CD4-positive, alpha-beta memory T cell (primary cell): ENCODE measurements at regions of chr6 and their contacts with region 1.

Region 1: GRCh38 chr6:20319520-20320357 is 81.9 kb upstream of the E2F3 start:
- DNase-seq: peak; percentile 77 to 86 (median 83)
- H3K4me3 ChIP-seq: peak overlapping the region; percentile 51 to 80
- H3K4me3 Mint-ChIP-seq: peak overlapping the region; percentile 87 to 96 (median 94)
- H3K27ac ChIP-seq: peak overlapping the region; percentile 68
- H3K27ac Mint-ChIP-seq: peak overlapping the region; percentile 88 to 98 (median 97)
- H3K4me1 ChIP-seq: peaks cover 16% of the 10 kb centered on the region
- H3K4me1 Mint-ChIP-seq: peaks cover 10 to 26% (median 19%) of the 10 kb centered on the region in 4 donors
- H3K27me3 ChIP-seq: no peaks in the 10 kb centered on the region
- H3K27me3 Mint-ChIP-seq: no peaks in the 10 kb centered on the region

Region 2: GRCh38 chr6:20291764-20292580 is 27.8 kb before region 1 on chr6:
- CTCF ChIA-PET with region 1: interaction called, 10 read pairs
- POLR2A ChIA-PET with region 1: interaction called, 13 read pairs
- intact Hi-C with region 1: no loop called
- DNase-seq: peak; percentile 55 to 68 (median 61)
- H3K4me3 ChIP-seq: no peak overlapping the region
- H3K4me3 Mint-ChIP-seq: peak overlapping the region in 7 of 8 donors; percentile 4 to 65 (median 34)
- H3K27ac ChIP-seq: no peak overlapping the region
- H3K27ac Mint-ChIP-seq: peak overlapping the region in 4 of 7 donors; percentile 8 to 63 (median 47)
- H3K4me1 ChIP-seq: peaks cover 13% of the 10 kb centered on the region
- H3K4me1 Mint-ChIP-seq: peaks cover 8 to 29% (median 14%) of the 10 kb centered on the region in 4 donors
- H3K27me3 ChIP-seq: no peaks in the 10 kb centered on the region
- H3K27me3 Mint-ChIP-seq: no peaks in the 10 kb centered on the region

Region 3: DNA sequence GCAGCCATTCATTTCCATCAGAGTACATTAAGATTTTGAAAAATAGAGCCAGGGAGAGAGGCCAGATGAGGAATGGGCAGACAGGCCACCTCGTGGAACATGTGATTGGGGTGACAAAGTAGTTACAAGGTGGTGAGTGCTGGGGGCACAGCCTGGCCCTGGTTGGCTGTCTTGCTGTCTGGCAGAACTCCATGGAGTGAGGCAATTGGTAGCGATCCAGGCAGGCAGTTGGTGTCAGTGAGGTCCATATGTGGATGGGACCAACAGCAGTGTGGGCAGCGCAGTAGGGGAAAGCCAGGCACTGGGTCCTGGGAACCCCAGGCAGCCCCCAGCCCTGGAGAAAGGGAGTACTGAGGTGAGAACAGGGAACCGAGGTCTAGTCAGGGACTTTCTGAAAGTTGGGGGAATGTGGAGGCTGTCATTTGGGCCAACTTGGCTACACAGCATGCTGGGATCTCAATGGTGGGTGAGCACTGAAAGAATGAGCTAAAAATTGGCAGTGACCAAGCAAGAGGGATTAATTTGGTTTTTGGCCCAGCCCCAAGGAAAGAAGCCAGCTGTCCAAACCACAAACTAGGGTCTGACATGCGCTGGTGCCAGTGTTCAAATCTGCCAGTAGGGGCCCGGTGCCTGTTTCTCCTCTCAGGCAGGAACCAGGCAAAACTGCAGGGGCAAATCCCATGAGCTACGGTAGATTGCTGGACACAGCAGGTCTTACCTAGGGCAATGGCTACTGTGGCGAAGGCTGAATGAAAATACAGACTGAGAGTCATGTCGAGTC is 20.5 kb after region 1 on chr6:
- CTCF ChIA-PET with region 1: interaction called, 24 read pairs
- POLR2A ChIA-PET with region 1: interaction called, 94 read pairs
- intact Hi-C with region 1: loop called (anchors 1 kb)
- DNase-seq: no peak
- H3K4me3 ChIP-seq: no peak overlapping the region
- H3K4me3 Mint-ChIP-seq: no peak overlapping the region
- H3K27ac ChIP-seq: no peak overlapping the region
- H3K27ac Mint-ChIP-seq: no peak overlapping the region
- H3K4me1 ChIP-seq: peaks cover 17% of the 10 kb centered on the region
- H3K4me1 Mint-ChIP-seq: peaks cover 12 to 23% (median 17%) of the 10 kb centered on the region in 4 donors
- H3K27me3 ChIP-seq: no peaks in the 10 kb centered on the region
- H3K27me3 Mint-ChIP-seq: no peaks in the 10 kb centered on the region

Region 4: DNA sequence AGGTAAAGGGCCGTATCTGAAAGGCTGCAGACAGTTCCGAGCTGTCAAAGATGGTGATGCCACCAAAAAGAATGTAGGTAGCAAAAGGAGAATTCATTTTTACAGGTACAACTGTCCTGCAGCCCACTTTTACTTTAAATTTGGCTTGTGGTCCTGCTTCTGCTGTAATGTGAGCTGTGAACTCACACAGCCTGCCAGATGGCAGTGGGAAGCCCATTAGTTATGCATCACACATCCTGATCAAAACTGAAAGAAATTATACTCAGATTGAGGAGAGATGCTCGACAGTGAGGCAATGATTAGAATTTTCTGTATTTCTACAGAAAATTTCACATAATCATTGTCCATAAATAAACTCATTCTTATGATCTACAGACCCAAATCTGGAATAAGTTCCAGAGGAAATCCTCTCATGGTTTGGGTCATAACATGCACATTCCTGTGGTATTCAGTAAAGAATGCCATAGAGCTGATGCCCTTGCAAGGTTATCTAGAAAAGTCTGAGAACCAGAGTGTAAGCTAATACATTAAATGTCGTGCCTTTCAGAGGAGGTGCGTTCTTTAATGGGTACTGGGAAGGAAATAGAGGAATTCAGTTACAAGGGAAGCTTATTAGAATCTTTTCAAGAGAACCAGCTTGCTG is 58.0 kb after region 1 on chr6:
- CTCF ChIA-PET with region 1: interaction called, 6 read pairs
- POLR2A ChIA-PET with region 1: interaction called, 363 read pairs
- intact Hi-C with region 1: no loop called
- DNase-seq: no peak
- H3K4me3 ChIP-seq: no peak overlapping the region
- H3K4me3 Mint-ChIP-seq: no peak overlapping the region
- H3K27ac ChIP-seq: no peak overlapping the region
- H3K27ac Mint-ChIP-seq: no peak overlapping the region
- H3K4me1 ChIP-seq: peaks cover 6% of the 10 kb centered on the region
- H3K4me1 Mint-ChIP-seq: peaks cover 7 to 10% (median 7%) of the 10 kb centered on the region in 4 donors
- H3K27me3 ChIP-seq: no peaks in the 10 kb centered on the region
- H3K27me3 Mint-ChIP-seq: no peaks in the 10 kb centered on the region

Region 5: GRCh38 chr6:20409427-20409971 is 89.8 kb after region 1 on chr6:
- CTCF ChIA-PET with region 1: interaction called, 60 read pairs
- POLR2A ChIA-PET with region 1: interaction called, 179 read pairs
- intact Hi-C with region 1: no loop called
- DNase-seq: no peak
- H3K4me3 ChIP-seq: peak overlapping the region in 1 of 2 donors; percentile 18
- H3K4me3 Mint-ChIP-seq: peak overlapping the region; percentile 43 to 86 (median 73)
- H3K27ac ChIP-seq: peak overlapping the region; percentile 40
- H3K27ac Mint-ChIP-seq: peak overlapping the region; percentile 58 to 89 (median 79)
- H3K4me1 ChIP-seq: peaks cover 63% of the 10 kb centered on the region
- H3K4me1 Mint-ChIP-seq: peaks cover 50 to 73% (median 61%) of the 10 kb centered on the region in 4 donors
- H3K27me3 ChIP-seq: no peaks in the 10 kb centered on the region
- H3K27me3 Mint-ChIP-seq: no peaks in the 10 kb centered on the region

Region 6: GRCh38 chr6:20534295-20535262 is 214.8 kb after region 1 on chr6 and contains the start of gene CDKAL1:
- CTCF ChIA-PET with region 1: interaction called, 16 read pairs
- POLR2A ChIA-PET with region 1: interaction called, 14 read pairs
- intact Hi-C with region 1: no loop called
- DNase-seq: peak; percentile 85 to 90 (median 86)
- H3K4me3 ChIP-seq: peak within 1 kb of the TSS; percentile 89 to 99
- H3K4me3 Mint-ChIP-seq: peak within 1 kb of the TSS; percentile 92 to 100 (median 99)
- H3K27ac ChIP-seq: peak within 1 kb of the TSS; percentile 72
- H3K27ac Mint-ChIP-seq: peak within 1 kb of the TSS; percentile 94 to 99 (median 99)
- H3K4me1 ChIP-seq: peaks cover 25% of the 10 kb centered on the region
- H3K4me1 Mint-ChIP-seq: peaks cover 22 to 52% (median 39%) of the 10 kb centered on the region in 4 donors
- H3K27me3 ChIP-seq: no peaks in the 10 kb centered on the region
- H3K27me3 Mint-ChIP-seq: no peaks in the 10 kb centered on the region
- total RNA-seq, gene CDKAL1: 22.3 to 22.7 TPM